Right ventricle myocardium inferior (tissue), 1 donor: ENCODE measurements at regions of chr5 and their contacts with region 1.

Region 1: DNA sequence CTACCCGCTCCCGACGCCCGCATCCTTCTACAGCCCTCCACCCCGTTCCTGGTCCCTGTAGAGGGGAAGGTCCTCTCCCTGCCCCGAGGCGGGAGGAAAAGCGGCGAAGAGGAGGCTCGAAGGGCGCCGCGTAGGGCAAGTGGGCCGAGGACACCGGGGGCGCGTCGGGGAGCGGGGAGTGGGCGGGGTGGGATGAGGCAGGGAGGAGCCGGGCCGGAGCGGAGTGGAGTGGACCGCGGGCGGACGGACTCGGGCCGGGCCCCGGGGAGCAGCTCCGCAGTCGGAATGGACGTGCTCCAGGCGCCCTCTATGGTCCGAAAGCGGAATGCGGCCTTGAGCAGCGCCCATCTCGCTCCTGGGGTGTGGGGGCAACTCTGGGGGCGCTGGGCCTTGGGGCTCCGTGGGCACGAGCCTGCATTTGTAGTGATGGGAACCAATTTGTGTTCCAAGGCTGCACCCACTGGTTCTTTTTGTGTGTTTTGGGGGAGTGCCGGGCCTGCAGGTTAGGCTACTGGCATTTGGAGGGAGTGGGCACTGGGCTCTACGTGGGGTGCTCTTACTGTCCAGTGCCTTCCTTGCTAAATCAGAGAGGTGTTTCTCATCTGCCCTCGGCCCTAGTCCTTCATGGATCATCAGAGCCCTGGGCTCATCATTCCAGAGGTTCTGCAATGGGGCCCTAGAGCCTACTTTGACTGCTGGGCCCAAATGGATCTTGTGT is 7.3 kb downstream of the IRX1 start:
- DNase-seq: no peak
- ATAC-seq: peak; percentile 75

Region 2: DNA sequence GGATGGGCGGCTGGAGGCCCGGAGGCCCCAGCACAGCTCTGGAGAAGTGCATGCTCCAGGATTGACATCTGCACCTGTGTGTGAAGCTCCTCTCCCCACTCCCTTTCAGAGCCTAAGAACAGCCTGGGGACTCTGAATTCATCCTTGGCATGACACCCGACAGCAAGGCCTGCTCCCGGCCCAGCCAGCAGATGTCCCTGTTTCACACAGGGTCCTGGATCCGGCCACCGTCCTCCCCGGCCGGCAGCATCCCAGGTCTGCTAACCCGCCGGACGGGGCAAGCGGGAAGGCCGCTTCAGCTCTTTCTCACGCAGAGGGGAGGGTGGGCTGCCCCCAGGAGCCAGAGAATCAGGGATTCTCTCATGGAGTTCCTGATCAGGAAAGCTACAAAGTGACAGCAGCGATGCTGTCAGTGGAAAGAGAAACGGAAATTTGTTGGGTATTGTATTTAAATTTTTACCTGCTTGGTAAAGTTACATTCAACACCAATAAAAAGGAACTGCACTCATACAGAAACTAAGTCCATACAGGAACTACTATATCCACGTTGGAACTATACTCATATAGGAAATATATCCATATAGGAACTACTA is 1394.9 kb before region 1 on chr5:
- intact Hi-C with region 1: loop called (anchors 10 kb)
- DNase-seq: no peak
- ATAC-seq: no peak

Region 3: DNA sequence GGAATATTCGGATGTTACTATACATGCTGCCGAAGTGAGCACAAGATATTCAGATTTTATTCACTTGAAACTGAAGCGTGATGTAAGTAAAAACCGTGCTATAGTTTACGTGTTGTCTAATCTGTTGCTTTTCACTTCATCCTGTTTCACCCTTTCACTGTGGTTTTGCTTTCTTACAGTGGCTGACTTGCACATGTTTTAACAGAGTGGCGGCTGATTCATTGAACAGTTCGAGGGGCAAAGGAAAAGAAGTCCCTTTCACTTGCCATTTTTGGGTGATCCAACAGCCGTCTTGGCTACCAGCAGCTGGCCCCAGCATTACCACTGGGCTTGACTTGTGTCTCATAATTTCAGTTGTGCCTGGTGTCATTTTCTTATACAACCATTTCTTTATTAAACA is 126.7 kb after region 1 on chr5:
- intact Hi-C with region 1: no loop called
- DNase-seq: no peak
- ATAC-seq: no peak

Region 4: DNA sequence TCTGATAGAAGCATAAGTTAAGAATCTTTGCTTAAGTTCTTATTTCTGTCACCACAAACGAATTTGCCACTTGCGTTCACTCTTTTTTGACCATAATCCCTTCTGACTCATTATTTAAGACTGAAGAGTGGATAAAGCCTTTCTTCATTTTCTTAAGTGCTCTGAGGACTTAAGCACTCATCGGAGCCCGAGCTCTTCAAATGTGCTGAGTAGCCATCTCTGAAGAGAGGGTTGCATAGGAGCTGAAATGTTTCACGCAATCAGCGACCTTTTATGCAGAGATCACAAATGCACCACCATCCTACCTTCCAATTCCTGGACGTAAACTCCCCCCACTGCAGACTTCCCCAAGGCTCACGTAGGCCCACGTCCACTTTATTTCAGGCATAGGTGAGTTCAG is 691.9 kb after region 1 on chr5:
- intact Hi-C with region 1: loop called (anchors 5 kb)
- DNase-seq: no peak
- ATAC-seq: no peak